CD4-positive, alpha-beta memory T cell (primary cell): ENCODE measurements at regions of chr16 and their contacts with region 1.

Region 1: GRCh38 chr16:18801197-18801972 is at the start of gene ARL6IP1:
- DNase-seq: peak; percentile 99 to 100 (median 99)
- H3K4me3 ChIP-seq: peak within 1 kb of the TSS; percentile 87 to 96
- H3K4me3 Mint-ChIP-seq: peak within 1 kb of the TSS; percentile 91 to 99 (median 94)
- H3K27ac ChIP-seq: peak within 1 kb of the TSS; percentile 90
- H3K27ac Mint-ChIP-seq: peak within 1 kb of the TSS; percentile 90 to 98 (median 96)
- H3K4me1 ChIP-seq: peaks cover 50% of the 10 kb centered on the region
- H3K4me1 Mint-ChIP-seq: peaks cover 27 to 67% (median 49%) of the 10 kb centered on the region in 4 donors
- H3K27me3 ChIP-seq: no peaks in the 10 kb centered on the region
- H3K27me3 Mint-ChIP-seq: no peaks in the 10 kb centered on the region
- total RNA-seq, gene ARL6IP1: 105 to 106 TPM

Region 2: DNA sequence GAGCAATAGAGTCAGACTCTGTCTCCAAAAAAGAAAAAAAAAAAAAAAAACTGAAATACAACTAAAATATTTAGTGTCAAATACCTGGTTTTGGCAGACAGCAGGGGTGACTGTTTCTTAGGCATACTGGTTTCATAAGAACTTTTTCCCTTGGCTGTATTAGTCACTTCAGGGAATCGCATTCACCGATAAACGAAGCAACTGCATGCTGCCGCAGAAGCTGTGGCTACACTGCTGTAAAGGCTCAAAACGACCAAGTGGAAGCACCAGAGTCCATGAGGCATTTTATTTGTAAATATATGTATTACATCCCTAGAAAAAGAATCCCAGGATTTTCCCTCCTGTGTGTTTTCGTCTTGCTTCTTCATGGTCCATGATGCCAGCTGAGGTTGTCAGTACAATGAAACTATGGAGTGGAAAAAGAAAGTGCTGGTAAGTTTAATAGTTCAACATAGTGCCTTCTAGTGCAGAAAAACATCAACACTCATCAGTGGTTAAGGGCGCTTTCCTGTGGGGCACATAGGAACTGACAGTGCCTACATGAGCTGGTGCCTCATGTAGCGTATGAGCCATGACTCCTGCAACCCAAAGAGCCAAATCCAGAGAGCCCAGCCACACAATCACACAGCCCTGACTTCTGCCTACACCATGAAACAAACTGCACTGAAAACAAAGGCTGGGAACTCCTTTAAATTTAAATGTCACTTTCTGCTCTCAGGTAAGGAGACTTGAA is 18.5 kb before region 1 on chr16:
- CTCF ChIA-PET with region 1: interaction called, 111 read pairs
- POLR2A ChIA-PET with region 1: interaction called, 176 read pairs
- intact Hi-C with region 1: loop called (anchors 2 kb)
- DNase-seq: peak in 1 of 5 donors; percentile 49
- H3K4me3 ChIP-seq: no peak overlapping the region
- H3K4me3 Mint-ChIP-seq: peak overlapping the region in 1 of 8 donors; percentile 62
- H3K27ac ChIP-seq: no peak overlapping the region
- H3K27ac Mint-ChIP-seq: peak overlapping the region; percentile 46 to 93 (median 83)
- H3K4me1 ChIP-seq: peaks cover 53% of the 10 kb centered on the region
- H3K4me1 Mint-ChIP-seq: peaks cover 31 to 48% (median 40%) of the 10 kb centered on the region in 4 donors
- H3K27me3 ChIP-seq: no peaks in the 10 kb centered on the region
- H3K27me3 Mint-ChIP-seq: no peaks in the 10 kb centered on the region

Region 3: GRCh38 chr16:18816286-18816685 is 14.9 kb after region 1 on chr16:
- CTCF ChIA-PET with region 1: interaction called, 33 read pairs
- POLR2A ChIA-PET with region 1: interaction called, 23 read pairs
- intact Hi-C with region 1: no loop called
- DNase-seq: no peak
- H3K4me3 ChIP-seq: no peak overlapping the region
- H3K4me3 Mint-ChIP-seq: no peak overlapping the region
- H3K27ac ChIP-seq: no peak overlapping the region
- H3K27ac Mint-ChIP-seq: no peak overlapping the region
- H3K4me1 ChIP-seq: peaks cover 15% of the 10 kb centered on the region
- H3K4me1 Mint-ChIP-seq: peaks cover 5 to 18% (median 11%) of the 10 kb centered on the region in 4 donors
- H3K27me3 ChIP-seq: no peaks in the 10 kb centered on the region
- H3K27me3 Mint-ChIP-seq: no peaks in the 10 kb centered on the region

Region 4: DNA sequence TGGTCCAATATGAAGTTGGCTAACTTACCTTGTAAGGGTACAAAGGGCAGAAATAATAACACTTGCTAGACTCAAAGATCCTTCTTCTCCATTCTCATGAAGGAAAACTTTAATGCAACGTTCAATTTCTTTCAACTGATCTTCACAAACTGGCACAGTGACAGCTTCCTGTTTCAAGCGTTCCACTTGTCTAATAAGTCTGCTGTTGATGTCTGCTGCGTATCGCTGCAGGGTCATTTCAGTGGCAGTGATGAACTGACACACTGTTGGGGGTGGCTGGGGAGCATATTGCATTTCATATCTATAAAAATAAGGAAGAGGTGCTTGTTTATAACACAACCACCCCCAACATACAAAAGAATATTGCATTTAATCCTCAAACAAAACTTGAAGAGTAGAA is 33.5 kb after region 1 on chr16:
- CTCF ChIA-PET with region 1: interaction called, 17 read pairs
- POLR2A ChIA-PET with region 1: interaction called, 5 read pairs
- intact Hi-C with region 1: no loop called
- DNase-seq: no peak
- H3K4me3 ChIP-seq: no peak overlapping the region
- H3K4me3 Mint-ChIP-seq: no peak overlapping the region
- H3K27ac ChIP-seq: no peak overlapping the region
- H3K27ac Mint-ChIP-seq: no peak overlapping the region
- H3K4me1 ChIP-seq: no peaks in the 10 kb centered on the region
- H3K4me1 Mint-ChIP-seq: no peaks in the 10 kb centered on the region
- H3K27me3 ChIP-seq: no peaks in the 10 kb centered on the region
- H3K27me3 Mint-ChIP-seq: no peaks in the 10 kb centered on the region

Region 5: GRCh38 chr16:18945233-18945632 is 143.8 kb after region 1 on chr16:
- CTCF ChIA-PET with region 1: interaction called, 24 read pairs
- POLR2A ChIA-PET with region 1: interaction called, 7 read pairs
- intact Hi-C with region 1: loop called (anchors 1 kb)
- DNase-seq: no peak
- H3K4me3 ChIP-seq: no peak overlapping the region
- H3K4me3 Mint-ChIP-seq: peak overlapping the region; percentile 54 to 90 (median 86)
- H3K27ac ChIP-seq: no peak overlapping the region
- H3K27ac Mint-ChIP-seq: peak overlapping the region in 5 of 7 donors; percentile 19 to 89 (median 62)
- H3K4me1 ChIP-seq: peaks cover 12% of the 10 kb centered on the region
- H3K4me1 Mint-ChIP-seq: peaks cover 4 to 11% (median 8%) of the 10 kb centered on the region in 4 donors
- H3K27me3 ChIP-seq: no peaks in the 10 kb centered on the region
- H3K27me3 Mint-ChIP-seq: no peaks in the 10 kb centered on the region

Region 6: DNA sequence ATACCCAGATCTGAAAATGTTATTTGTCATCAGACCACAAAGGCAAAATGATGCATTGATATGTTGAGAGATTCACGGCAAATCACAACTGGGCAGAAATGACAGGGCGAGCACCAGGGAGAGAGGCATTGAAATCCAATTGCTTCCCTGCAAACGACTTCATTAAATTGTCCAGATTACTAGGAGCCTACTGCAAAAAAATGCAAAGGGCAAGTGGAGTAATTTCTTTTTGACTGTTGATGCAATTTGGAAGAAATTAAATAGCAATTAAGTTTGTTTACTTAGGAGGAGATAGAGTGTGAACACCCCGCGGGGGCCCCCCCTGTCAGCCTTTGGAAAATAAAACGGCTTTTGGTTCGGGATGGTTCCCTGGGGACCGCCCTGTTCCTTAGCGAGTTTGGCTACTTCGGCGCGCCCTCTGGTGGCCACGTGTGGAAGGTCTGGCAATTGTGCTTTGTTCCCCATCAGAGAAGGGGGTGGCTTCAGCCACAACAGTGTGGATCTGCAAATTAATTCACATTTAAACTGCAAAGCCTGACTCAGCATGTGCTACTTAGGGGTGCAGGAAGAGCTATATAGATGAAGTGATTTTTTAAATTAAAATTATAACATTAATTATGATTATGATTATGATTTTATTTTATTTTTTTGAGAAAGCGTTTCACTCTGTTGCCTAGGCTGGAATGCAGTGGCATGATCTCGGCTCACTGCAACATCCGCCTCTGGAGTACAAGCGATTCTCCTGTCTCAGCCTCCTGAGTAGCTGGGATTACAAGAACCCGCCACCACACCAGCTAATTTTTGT is 167.9 kb after region 1 on chr16:
- CTCF ChIA-PET with region 1: interaction called, 65 read pairs
- POLR2A ChIA-PET with region 1: interaction called, 4 read pairs
- intact Hi-C with region 1: loop called (anchors 1 kb)
- DNase-seq: peak; percentile 57 to 73 (median 61)
- H3K4me3 ChIP-seq: no peak overlapping the region
- H3K4me3 Mint-ChIP-seq: peak overlapping the region in 6 of 8 donors; percentile 21 to 59 (median 49)
- H3K27ac ChIP-seq: no peak overlapping the region
- H3K27ac Mint-ChIP-seq: no peak overlapping the region
- H3K4me1 ChIP-seq: no peaks in the 10 kb centered on the region
- H3K4me1 Mint-ChIP-seq: peaks cover 0 to 6% (median 2%) of the 10 kb centered on the region in 4 donors
- H3K27me3 ChIP-seq: no peaks in the 10 kb centered on the region
- H3K27me3 Mint-ChIP-seq: peaks cover 0 to 2% of the 10 kb centered on the region in 2 donors

Region 7: GRCh38 chr16:19389246-19389645 is 587.9 kb after region 1 on chr16:
- CTCF ChIA-PET with region 1: no interaction called
- POLR2A ChIA-PET with region 1: no interaction called
- intact Hi-C with region 1: no loop called
- DNase-seq: peak in 4 of 5 donors; percentile 26 to 45 (median 28)
- H3K4me3 ChIP-seq: no peak overlapping the region
- H3K4me3 Mint-ChIP-seq: no peak overlapping the region
- H3K27ac ChIP-seq: no peak overlapping the region
- H3K27ac Mint-ChIP-seq: no peak overlapping the region
- H3K4me1 ChIP-seq: no peaks in the 10 kb centered on the region
- H3K4me1 Mint-ChIP-seq: peaks cover 0 to 14% (median 9%) of the 10 kb centered on the region in 4 donors
- H3K27me3 ChIP-seq: no peaks in the 10 kb centered on the region
- H3K27me3 Mint-ChIP-seq: peaks cover 6 to 10% of the 10 kb centered on the region in 2 donors

Region 8: DNA sequence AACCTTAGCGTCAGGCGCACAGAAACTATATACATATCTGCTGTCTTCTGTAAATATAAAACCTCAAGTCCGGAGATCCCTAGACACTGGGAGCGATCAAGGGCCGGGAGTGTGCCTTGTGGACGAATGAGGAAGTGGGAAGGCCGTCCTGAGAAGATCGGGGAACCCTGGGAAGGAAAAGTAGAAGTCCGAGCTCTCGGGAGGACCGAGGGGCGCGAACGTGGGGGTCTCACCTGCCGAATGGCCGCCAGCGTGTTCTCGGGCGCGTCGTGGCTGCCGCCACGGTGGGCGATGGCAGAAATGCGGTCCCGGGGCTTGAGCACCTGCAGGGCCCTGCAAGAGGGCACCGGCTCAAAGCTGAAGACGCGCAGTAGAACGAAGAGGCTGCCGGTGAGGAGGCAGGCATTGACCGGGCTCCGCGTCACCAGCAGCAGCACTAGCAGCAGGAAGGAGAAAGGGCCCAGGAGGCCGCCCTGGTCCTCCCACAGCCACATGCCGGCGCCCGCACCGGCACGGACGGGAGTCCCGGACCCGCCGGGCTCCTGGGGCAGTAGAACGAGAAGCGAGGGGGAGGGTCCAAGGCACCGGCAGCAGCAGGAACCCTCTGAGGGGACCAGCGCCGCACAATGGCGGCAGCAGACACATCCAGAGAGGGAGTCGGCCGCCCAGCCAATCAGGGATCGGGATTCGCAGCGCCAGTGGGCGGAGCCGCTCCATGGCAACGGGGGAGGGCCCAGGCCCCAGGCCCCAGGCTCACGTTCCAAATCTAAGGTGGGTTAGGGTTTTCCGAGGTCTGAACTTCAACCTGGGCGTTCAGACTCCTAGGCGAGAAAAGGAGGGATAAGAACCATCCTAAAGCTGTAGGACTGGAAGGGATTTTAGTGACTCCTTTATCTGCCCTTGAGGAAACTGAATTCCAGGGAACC is 720.3 kb after region 1 on chr16 and contains the start of gene GDE1:
- CTCF ChIA-PET with region 1: interaction called, 7 read pairs
- POLR2A ChIA-PET with region 1: no interaction called
- intact Hi-C with region 1: loop called (anchors 1 kb)
- DNase-seq: peak; percentile 88 to 93 (median 89)
- H3K4me3 ChIP-seq: peak within 1 kb of the TSS; percentile 87 to 89
- H3K4me3 Mint-ChIP-seq: peak within 1 kb of the TSS; percentile 95 to 99 (median 96)
- H3K27ac ChIP-seq: peak within 1 kb of the TSS; percentile 78
- H3K27ac Mint-ChIP-seq: peak within 1 kb of the TSS; percentile 73 to 98 (median 95)
- H3K4me1 ChIP-seq: peaks cover 70% of the 10 kb centered on the region
- H3K4me1 Mint-ChIP-seq: peaks cover 45 to 74% (median 55%) of the 10 kb centered on the region in 4 donors
- H3K27me3 ChIP-seq: no peaks in the 10 kb centered on the region
- H3K27me3 Mint-ChIP-seq: no peaks in the 10 kb centered on the region
- total RNA-seq, gene GDE1: 23.2 to 23.3 TPM